ENCODE measurements at regions of chr5 and their contacts with region 1.

Region 1: DNA sequence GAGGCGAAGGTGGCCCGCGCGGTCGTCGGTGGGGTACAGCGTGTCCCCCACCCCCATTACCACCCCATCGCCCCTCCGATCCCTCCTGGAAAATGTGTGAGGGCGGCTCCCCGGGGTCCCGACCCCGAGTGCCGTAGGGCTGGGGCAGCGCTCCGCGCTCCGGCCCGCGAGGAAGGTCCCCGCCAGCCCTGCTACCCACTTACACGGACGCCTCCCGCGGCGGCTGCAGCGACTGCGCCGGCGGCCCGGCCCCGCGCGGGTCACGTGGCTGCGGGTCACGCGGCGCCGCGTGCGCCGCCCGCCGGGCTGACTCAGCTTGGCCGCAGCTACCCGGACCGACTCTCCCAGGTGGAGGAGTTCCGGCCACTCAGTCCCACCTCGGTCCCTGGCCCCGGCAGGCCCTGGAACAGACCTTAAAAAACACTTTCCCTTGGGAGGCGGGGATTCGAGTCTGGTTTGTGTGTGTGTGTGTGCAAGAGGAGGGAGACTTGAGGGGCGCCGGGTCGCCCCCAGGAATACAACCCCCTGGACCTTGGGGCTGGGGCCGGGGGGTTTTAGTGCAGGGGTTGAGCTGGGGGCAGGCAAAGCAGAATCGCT is at the start of gene GNPDA1:
- DNase-seq: peak; percentile 29 to 85 (median 61)
- ATAC-seq: peak; percentile 52
- H3K4me3 ChIP-seq: peak within 1 kb of the TSS; percentile 60 to 78
- H3K4me3 Mint-ChIP-seq: peak within 1 kb of the TSS; percentile 83
- H3K27ac ChIP-seq: peak within 1 kb of the TSS; percentile 55 to 72
- H3K27ac Mint-ChIP-seq: peak within 1 kb of the TSS; percentile 90
- H3K4me1 ChIP-seq: peaks cover 59% of the 10 kb centered on the region
- H3K4me1 Mint-ChIP-seq: peaks cover 72% of the 10 kb centered on the region
- H3K27me3 ChIP-seq: no peaks in the 10 kb centered on the region
- H3K27me3 Mint-ChIP-seq: no peaks in the 10 kb centered on the region
- CTCF ChIP-seq: no peak
- total RNA-seq, gene GNPDA1: 5.2 TPM

Region 2: GRCh38 chr5:141849375-141850243 is 163.3 kb before region 1 on chr5:
- CTCF ChIA-PET with region 1: no interaction called
- POLR2A ChIA-PET with region 1: no interaction called
- intact Hi-C with region 1: no loop called
- DNase-seq: peak; percentile 42 to 83 (median 70)
- ATAC-seq: peak; percentile 79
- H3K4me3 ChIP-seq: peak overlapping the region; percentile 77 to 84
- H3K4me3 Mint-ChIP-seq: peak overlapping the region; percentile 87
- H3K27ac ChIP-seq: peak overlapping the region; percentile 73
- H3K27ac Mint-ChIP-seq: peak overlapping the region; percentile 82
- H3K4me1 ChIP-seq: peaks cover 7% of the 10 kb centered on the region
- H3K4me1 Mint-ChIP-seq: peaks cover 10% of the 10 kb centered on the region
- H3K27me3 ChIP-seq: no peaks in the 10 kb centered on the region
- H3K27me3 Mint-ChIP-seq: peaks cover 2% of the 10 kb centered on the region
- CTCF ChIP-seq: no peak

Region 3: DNA sequence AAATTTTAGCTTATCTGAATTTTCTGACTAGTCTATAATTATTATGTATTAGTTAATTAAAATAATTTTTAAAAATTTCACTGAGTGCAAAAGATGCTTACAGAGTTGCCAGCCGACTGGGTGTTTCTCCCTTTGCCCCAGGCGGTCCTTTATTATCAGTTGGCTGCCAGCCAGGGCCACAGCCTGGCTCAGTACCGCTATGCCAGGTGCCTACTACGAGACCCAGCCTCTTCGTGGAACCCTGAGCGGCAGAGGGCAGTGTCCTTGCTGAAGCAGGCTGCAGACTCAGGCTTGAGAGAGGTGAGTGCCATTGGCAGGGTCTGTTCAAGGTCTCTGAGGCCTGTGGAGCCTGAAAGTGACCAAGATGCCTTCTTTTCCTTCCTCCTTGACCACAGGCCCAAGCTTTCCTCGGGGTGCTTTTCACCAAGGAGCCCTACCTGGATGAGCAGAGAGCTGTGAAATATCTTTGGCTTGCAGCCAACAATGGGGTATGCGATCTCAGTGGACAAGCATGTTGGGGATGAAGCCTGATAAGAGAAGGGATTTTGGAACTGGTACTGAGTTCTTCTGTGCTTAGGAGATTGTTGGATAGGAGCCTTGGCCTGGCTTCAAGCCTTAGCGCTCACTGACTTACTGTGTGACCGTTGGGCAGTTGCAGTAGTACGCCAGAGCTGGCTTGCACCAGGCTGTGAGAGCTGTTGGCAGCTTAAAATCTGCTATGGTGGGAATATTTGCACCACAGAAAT is 78.6 kb before region 1 on chr5:
- CTCF ChIA-PET with region 1: no interaction called
- POLR2A ChIA-PET with region 1: no interaction called
- intact Hi-C with region 1: no loop called
- DNase-seq: no peak
- ATAC-seq: no peak
- H3K4me3 ChIP-seq: no peak overlapping the region
- H3K4me3 Mint-ChIP-seq: no peak overlapping the region
- H3K27ac ChIP-seq: no peak overlapping the region
- H3K27ac Mint-ChIP-seq: no peak overlapping the region
- H3K4me1 ChIP-seq: no peaks in the 10 kb centered on the region
- H3K4me1 Mint-ChIP-seq: peaks cover 2% of the 10 kb centered on the region
- H3K27me3 ChIP-seq: no peaks in the 10 kb centered on the region
- H3K27me3 Mint-ChIP-seq: no peaks in the 10 kb centered on the region
- CTCF ChIP-seq: no peak

Region 4: GRCh38 chr5:141968914-141969608 is 43.8 kb before region 1 on chr5 and contains the start of gene RNF14:
- CTCF ChIA-PET with region 1: interaction called, 3 read pairs
- POLR2A ChIA-PET with region 1: interaction called, 6 read pairs
- intact Hi-C with region 1: loop called in 1 of 2 experiments (anchors 2 kb)
- DNase-seq: peak; percentile 86 to 97 (median 92)
- ATAC-seq: peak; percentile 94
- H3K4me3 ChIP-seq: peak within 1 kb of the TSS; percentile 77 to 94
- H3K4me3 Mint-ChIP-seq: peak within 1 kb of the TSS; percentile 98
- H3K27ac ChIP-seq: peak within 1 kb of the TSS; percentile 80 to 97
- H3K27ac Mint-ChIP-seq: peak within 1 kb of the TSS; percentile 99
- H3K4me1 ChIP-seq: peaks cover 18% of the 10 kb centered on the region
- H3K4me1 Mint-ChIP-seq: peaks cover 27% of the 10 kb centered on the region
- H3K27me3 ChIP-seq: no peaks in the 10 kb centered on the region
- H3K27me3 Mint-ChIP-seq: no peaks in the 10 kb centered on the region
- CTCF ChIP-seq: peak; percentile 98
- total RNA-seq, gene RNF14: 11.3 to 12.8 TPM

Region 5: DNA sequence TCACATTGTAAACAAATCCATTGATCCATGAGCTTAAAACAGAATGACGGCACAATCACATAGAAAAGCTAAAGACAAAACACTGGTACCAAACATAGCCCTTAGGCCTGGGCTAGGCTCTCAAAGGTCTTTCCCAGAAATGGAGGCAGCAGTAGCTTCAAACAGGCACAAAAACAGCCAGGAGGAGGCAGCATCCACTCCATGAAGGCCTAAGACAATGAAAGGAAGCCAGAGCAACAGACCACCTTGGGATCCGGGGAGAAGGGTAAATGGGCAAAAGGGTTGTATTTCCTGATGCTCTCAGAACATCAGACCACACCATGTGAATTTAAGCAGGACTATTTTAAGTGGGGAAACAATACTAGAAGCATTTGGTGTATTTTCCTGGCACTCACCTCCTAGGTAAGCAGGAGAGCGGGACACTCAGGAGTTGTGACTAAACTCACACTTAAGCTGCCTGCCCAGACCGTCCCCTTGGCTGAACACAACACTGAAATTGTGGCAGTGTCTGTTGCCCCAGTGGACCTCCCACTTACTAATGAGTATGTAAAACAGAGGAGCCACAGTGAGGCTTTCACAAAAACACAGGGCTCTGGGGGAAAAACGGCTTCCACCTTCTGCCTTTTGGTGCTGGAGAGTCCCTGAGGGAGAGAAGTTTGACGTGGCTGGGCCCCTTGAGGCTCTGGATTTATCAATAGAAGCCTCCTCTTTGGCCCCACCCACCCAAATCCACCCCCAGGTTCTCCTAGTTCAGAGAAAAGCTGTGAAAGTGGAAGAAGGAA is 12.0 kb before region 1 on chr5:
- CTCF ChIA-PET with region 1: interaction called, 7 read pairs
- POLR2A ChIA-PET with region 1: interaction called, 3 read pairs
- intact Hi-C with region 1: loop called in 1 of 2 experiments (anchors 2 kb)
- DNase-seq: peak in 1 of 9 experiments; percentile 47
- ATAC-seq: peak; percentile 36
- H3K4me3 ChIP-seq: no peak overlapping the region
- H3K4me3 Mint-ChIP-seq: no peak overlapping the region
- H3K27ac ChIP-seq: no peak overlapping the region
- H3K27ac Mint-ChIP-seq: peak overlapping the region; percentile 71
- H3K4me1 ChIP-seq: peaks cover 16% of the 10 kb centered on the region
- H3K4me1 Mint-ChIP-seq: peaks cover 20% of the 10 kb centered on the region
- H3K27me3 ChIP-seq: no peaks in the 10 kb centered on the region
- H3K27me3 Mint-ChIP-seq: no peaks in the 10 kb centered on the region
- CTCF ChIP-seq: no peak

Region 6: GRCh38 chr5:142032747-142033631 is 20.1 kb after region 1 on chr5:
- CTCF ChIA-PET with region 1: interaction called, 18 read pairs
- POLR2A ChIA-PET with region 1: no interaction called
- intact Hi-C with region 1: no loop called
- DNase-seq: no peak
- ATAC-seq: no peak
- H3K4me3 ChIP-seq: no peak overlapping the region
- H3K4me3 Mint-ChIP-seq: no peak overlapping the region
- H3K27ac ChIP-seq: no peak overlapping the region
- H3K27ac Mint-ChIP-seq: no peak overlapping the region
- H3K4me1 ChIP-seq: peaks cover 18% of the 10 kb centered on the region
- H3K4me1 Mint-ChIP-seq: peaks cover 24% of the 10 kb centered on the region
- H3K27me3 ChIP-seq: no peaks in the 10 kb centered on the region
- H3K27me3 Mint-ChIP-seq: no peaks in the 10 kb centered on the region
- CTCF ChIP-seq: no peak

Region 7: DNA sequence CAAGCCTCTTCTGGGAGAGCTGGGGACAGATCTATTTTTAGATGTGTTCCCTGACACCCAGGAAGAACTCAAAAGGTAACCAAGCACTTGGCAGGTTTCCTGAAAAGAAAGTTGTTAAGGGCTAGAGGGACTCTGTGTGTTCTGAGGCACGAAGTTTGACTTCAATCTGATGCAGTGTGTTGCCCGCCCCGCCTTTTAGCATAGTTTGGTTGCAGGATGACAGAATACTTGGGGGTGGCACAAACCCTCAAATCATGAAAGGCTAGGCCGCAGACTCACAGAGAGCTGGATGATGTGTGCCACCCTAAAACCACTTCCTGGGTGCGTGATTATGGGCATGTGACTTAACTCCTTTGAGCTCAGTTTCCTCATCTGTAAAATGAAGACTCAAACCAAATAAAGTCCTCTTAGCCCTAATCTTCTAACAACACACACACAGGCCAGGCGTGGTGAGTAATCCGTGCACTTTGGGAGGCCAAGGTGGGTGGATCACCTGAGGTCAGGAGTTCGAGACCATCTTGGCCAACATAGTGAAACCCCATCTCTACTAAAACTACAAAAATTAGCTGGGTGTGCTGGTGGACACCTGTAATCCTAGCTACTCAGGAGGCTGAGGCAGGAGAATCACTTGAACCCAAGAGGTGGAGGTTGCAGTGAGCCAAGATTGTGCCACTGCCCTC is 82.9 kb after region 1 on chr5:
- CTCF ChIA-PET with region 1: interaction called, 10 read pairs
- POLR2A ChIA-PET with region 1: interaction called, 10 read pairs
- intact Hi-C with region 1: loop called in 1 of 2 experiments (anchors 2 kb)
- DNase-seq: peak; percentile 68 to 95 (median 80)
- ATAC-seq: peak; percentile 87
- H3K4me3 ChIP-seq: no peak overlapping the region
- H3K4me3 Mint-ChIP-seq: peak overlapping the region; percentile 56
- H3K27ac ChIP-seq: peak overlapping the region; percentile 62 to 78
- H3K27ac Mint-ChIP-seq: peak overlapping the region; percentile 95
- H3K4me1 ChIP-seq: peaks cover 61% of the 10 kb centered on the region
- H3K4me1 Mint-ChIP-seq: peaks cover 57% of the 10 kb centered on the region
- H3K27me3 ChIP-seq: no peaks in the 10 kb centered on the region
- H3K27me3 Mint-ChIP-seq: no peaks in the 10 kb centered on the region
- CTCF ChIP-seq: no peak

Region 8: GRCh38 chr5:142145106-142145900 is 132.4 kb after region 1 on chr5:
- CTCF ChIA-PET with region 1: interaction called, 152 read pairs
- POLR2A ChIA-PET with region 1: interaction called, 4 read pairs
- intact Hi-C with region 1: loop called (anchors 1 kb)
- DNase-seq: peak; percentile 18 to 76 (median 61)
- ATAC-seq: peak; percentile 78
- H3K4me3 ChIP-seq: no peak overlapping the region
- H3K4me3 Mint-ChIP-seq: no peak overlapping the region
- H3K27ac ChIP-seq: no peak overlapping the region
- H3K27ac Mint-ChIP-seq: no peak overlapping the region
- H3K4me1 ChIP-seq: no peaks in the 10 kb centered on the region
- H3K4me1 Mint-ChIP-seq: peaks cover 13% of the 10 kb centered on the region
- H3K27me3 ChIP-seq: no peaks in the 10 kb centered on the region
- H3K27me3 Mint-ChIP-seq: no peaks in the 10 kb centered on the region
- CTCF ChIP-seq: peak; percentile 63

Region 9: GRCh38 chr5:142235055-142235797 is 222.3 kb after region 1 on chr5:
- CTCF ChIA-PET with region 1: no interaction called
- POLR2A ChIA-PET with region 1: no interaction called
- intact Hi-C with region 1: no loop called
- DNase-seq: no peak
- ATAC-seq: peak; percentile 49
- H3K4me3 ChIP-seq: no peak overlapping the region
- H3K4me3 Mint-ChIP-seq: no peak overlapping the region
- H3K27ac ChIP-seq: no peak overlapping the region
- H3K27ac Mint-ChIP-seq: no peak overlapping the region
- H3K4me1 ChIP-seq: no peaks in the 10 kb centered on the region
- H3K4me1 Mint-ChIP-seq: peaks cover 5% of the 10 kb centered on the region
- H3K27me3 ChIP-seq: no peaks in the 10 kb centered on the region
- H3K27me3 Mint-ChIP-seq: peaks cover 12% of the 10 kb centered on the region
- CTCF ChIP-seq: no peak

Region 10: GRCh38 chr5:142356716-142357473 is 344.0 kb after region 1 on chr5:
- CTCF ChIA-PET with region 1: no interaction called
- POLR2A ChIA-PET with region 1: no interaction called
- intact Hi-C with region 1: loop called in 1 of 2 experiments (anchors 10 kb)
- DNase-seq: peak; percentile 72 to 93 (median 87)
- ATAC-seq: peak; percentile 82
- H3K4me3 ChIP-seq: peak overlapping the region; percentile 53 to 77
- H3K4me3 Mint-ChIP-seq: peak overlapping the region; percentile 86
- H3K27ac ChIP-seq: peak overlapping the region; percentile 40 to 63
- H3K27ac Mint-ChIP-seq: peak overlapping the region; percentile 88
- H3K4me1 ChIP-seq: peaks cover 33% of the 10 kb centered on the region
- H3K4me1 Mint-ChIP-seq: peaks cover 51% of the 10 kb centered on the region
- H3K27me3 ChIP-seq: no peaks in the 10 kb centered on the region
- H3K27me3 Mint-ChIP-seq: no peaks in the 10 kb centered on the region
- CTCF ChIP-seq: no peak

Measured in CD8-positive, alpha-beta T cell (primary cell).